CD8-positive, alpha-beta memory T cell (primary cell): ENCODE measurements at regions of chr17 and their contacts with region 1.

Region 1: DNA sequence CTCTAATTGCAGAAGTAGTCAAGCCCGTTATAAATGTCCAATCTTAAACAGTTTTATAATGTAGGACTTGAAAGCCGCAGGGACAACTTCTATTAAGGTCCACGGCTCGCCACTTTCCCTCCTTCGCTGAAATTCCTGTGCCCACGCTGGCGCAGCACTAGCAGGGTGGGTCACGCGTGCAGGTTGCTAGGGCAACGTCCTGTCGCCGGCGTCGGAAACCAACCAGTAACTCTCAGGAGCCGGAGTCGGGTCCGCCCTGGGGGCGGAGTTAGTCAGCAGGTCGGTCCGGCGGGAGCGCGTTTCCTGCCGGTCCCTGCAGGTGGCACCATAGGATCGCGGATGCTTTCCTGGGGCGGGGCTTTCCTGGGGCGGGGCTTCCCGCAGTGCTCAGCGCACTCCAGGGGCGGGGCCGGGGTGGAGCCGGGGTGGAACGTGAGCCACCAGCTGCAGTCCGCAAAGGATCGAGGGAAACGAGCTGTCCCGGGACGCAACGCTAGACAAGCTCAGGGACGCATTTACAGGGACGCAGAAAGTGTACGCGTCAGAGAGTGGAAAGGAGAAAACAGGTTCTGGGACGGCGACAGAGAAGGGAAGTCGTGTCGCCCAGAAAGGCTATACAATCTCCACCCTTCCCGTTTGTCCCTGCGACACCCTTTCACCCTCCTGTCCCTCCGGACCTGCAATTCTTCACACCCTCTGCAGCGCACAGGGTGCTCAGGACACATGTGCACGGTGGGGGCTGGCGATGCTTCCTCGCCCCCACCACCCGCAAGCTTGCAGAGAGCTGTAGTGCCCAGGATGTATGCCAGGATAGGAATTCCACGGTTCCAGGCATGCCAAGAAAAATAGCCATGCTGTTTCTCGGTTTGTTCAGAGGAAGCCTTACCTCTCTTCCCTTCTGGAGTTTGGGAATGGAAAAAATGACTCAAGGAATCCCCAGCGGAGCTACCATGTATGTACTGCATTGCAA is 12.4 kb downstream of the COPZ2 start:
- DNase-seq: peak; percentile 93 to 99 (median 98)
- H3K4me3 ChIP-seq: peak overlapping the region; percentile 60
- H3K4me3 Mint-ChIP-seq: peak overlapping the region; percentile 81 to 96 (median 88)
- H3K27ac ChIP-seq: peak overlapping the region; percentile 49
- H3K27ac Mint-ChIP-seq: peak overlapping the region; percentile 56 to 97 (median 90)
- H3K4me1 ChIP-seq: peaks cover 36% of the 10 kb centered on the region
- H3K4me1 Mint-ChIP-seq: peaks cover 24 to 35% (median 27%) of the 10 kb centered on the region in 3 donors
- H3K27me3 ChIP-seq: peaks cover 10% of the 10 kb centered on the region
- H3K27me3 Mint-ChIP-seq: peaks cover 19 to 27% of the 10 kb centered on the region in 2 donors

Region 2: DNA sequence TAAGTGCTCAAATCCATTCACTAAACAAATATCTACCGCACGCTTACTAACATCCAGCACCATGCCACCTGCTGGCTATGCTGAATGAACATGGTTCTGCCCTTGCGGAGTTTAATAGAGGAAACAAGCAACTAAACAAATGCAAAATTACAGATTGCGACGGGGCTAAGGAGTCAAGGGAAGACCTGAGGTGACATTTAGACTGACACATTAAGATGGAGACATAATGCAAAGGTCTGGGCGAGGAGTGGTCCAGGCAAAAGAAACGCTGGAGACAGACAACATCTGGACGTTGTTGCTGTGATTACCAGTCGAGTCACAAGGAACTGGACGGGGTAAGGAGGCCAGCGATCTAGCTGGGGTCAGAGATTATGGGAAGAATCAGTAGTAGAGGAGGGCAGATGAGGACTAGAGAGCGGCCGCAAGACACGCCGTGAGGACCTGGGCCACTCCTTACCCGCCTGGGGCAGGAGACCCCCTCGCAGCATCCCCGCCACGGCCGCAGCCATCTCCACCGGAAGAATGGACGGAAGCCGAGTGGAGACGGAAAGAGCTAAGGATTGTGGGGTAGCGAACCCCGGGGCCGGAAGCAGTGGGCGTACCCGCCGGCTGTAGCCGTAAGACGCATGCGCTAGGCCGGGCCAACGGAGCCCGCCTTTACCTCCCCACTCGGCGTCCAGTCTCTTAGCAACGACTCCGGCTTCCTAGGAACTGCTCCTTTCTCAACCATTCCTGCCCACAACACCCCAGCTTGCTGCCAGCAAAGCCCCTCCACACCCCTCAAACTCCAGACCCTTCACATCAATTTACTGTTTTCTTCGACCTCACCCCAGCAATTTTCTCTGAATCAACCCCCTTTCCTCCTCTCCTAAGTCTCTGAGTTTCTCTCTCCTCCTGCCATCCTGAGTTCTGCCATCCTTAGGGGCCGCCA is 194.0 kb before region 1 on chr17 and contains the starts of genes LRRC46 and MRPL10:
- CTCF ChIA-PET with region 1: no interaction called
- POLR2A ChIA-PET with region 1: no interaction called
- DNase-seq: peak; percentile 87 to 94 (median 90)
- H3K4me3 ChIP-seq: peak within 1 kb of the TSS; percentile 98
- H3K4me3 Mint-ChIP-seq: peak within 1 kb of the TSS; percentile 92 to 99 (median 95)
- H3K27ac ChIP-seq: peak within 1 kb of the TSS; percentile 98
- H3K27ac Mint-ChIP-seq: peak within 1 kb of the TSS; percentile 95 to 100 (median 100)
- H3K4me1 ChIP-seq: peaks cover 59% of the 10 kb centered on the region
- H3K4me1 Mint-ChIP-seq: peaks cover 50 to 78% (median 59%) of the 10 kb centered on the region in 3 donors
- H3K27me3 ChIP-seq: no peaks in the 10 kb centered on the region
- H3K27me3 Mint-ChIP-seq: peaks cover 0 to 4% of the 10 kb centered on the region in 2 donors
- total RNA-seq, gene LRRC46: 0.49 to 0.83 TPM
- total RNA-seq, gene MRPL10: 67.0 to 67.7 TPM

Region 3: GRCh38 chr17:47970704-47971463 is 54.3 kb before region 1 on chr17 and contains the start of gene CDK5RAP3:
- CTCF ChIA-PET with region 1: interaction called, 17 read pairs
- POLR2A ChIA-PET with region 1: interaction called, 4 read pairs
- DNase-seq: peak; percentile 97 to 98 (median 98)
- H3K4me3 ChIP-seq: peak within 1 kb of the TSS; percentile 74
- H3K4me3 Mint-ChIP-seq: peak within 1 kb of the TSS; percentile 98 to 100 (median 99)
- H3K27ac ChIP-seq: peak within 1 kb of the TSS; percentile 73
- H3K27ac Mint-ChIP-seq: peak within 1 kb of the TSS; percentile 90 to 99 (median 94)
- H3K4me1 ChIP-seq: peaks cover 14% of the 10 kb centered on the region
- H3K4me1 Mint-ChIP-seq: peaks cover 26 to 37% (median 33%) of the 10 kb centered on the region in 3 donors
- H3K27me3 ChIP-seq: no peaks in the 10 kb centered on the region
- H3K27me3 Mint-ChIP-seq: peaks cover 0 to 1% of the 10 kb centered on the region in 2 donors
- total RNA-seq, gene CDK5RAP3: 178 to 184 TPM

Region 4: DNA sequence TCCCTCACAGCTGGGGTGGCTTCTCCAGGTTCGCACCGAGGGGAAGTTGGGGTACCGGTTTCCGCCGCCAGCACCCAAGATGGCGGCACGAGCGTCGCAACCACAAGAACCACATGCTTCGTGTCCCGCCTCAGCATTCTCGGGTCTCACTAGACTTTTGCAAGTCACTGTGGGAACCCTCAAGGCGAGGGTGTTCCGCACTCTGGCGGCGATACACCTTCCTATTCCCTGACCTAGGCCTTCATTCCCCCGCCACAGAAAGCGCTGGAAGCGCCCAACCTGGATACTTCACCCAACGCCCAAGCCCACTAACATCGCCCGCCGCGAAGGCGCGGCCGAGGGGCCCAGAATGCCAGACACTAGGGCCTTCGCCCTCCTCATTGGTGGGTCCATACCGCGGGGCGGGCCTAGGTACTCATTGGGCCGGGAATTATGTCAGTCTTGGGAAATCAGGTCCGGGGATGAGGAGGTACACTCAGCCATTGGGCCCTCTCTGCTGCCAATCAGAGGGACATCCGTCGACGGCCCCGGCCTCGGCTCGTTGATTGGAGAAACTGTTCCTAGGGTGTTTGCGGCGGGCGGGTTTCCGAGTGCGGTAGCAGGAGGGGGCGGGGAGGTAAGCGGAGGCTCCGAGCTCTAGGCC is 22.6 kb after region 1 on chr17 and contains the start of gene NFE2L1:
- CTCF ChIA-PET with region 1: interaction called, 27 read pairs
- POLR2A ChIA-PET with region 1: interaction called, 4 read pairs
- DNase-seq: peak; percentile 96 to 99 (median 98)
- H3K4me3 ChIP-seq: peak within 1 kb of the TSS; percentile 84
- H3K4me3 Mint-ChIP-seq: peak within 1 kb of the TSS; percentile 85 to 99 (median 96)
- H3K27ac ChIP-seq: peak within 1 kb of the TSS; percentile 93
- H3K27ac Mint-ChIP-seq: peak within 1 kb of the TSS; percentile 85 to 100 (median 98)
- H3K4me1 ChIP-seq: peaks cover 50% of the 10 kb centered on the region
- H3K4me1 Mint-ChIP-seq: peaks cover 46 to 64% (median 62%) of the 10 kb centered on the region in 3 donors
- H3K27me3 ChIP-seq: no peaks in the 10 kb centered on the region
- H3K27me3 Mint-ChIP-seq: peaks cover 0 to 6% of the 10 kb centered on the region in 2 donors
- total RNA-seq, gene NFE2L1: 94.5 to 98.4 TPM

Region 5: GRCh38 chr17:48074315-48075081 is 49.3 kb after region 1 on chr17:
- CTCF ChIA-PET with region 1: interaction called, 45 read pairs
- POLR2A ChIA-PET with region 1: no interaction called
- DNase-seq: peak; percentile 60 to 80 (median 67)
- H3K4me3 ChIP-seq: no peak overlapping the region
- H3K4me3 Mint-ChIP-seq: no peak overlapping the region
- H3K27ac ChIP-seq: no peak overlapping the region
- H3K27ac Mint-ChIP-seq: no peak overlapping the region
- H3K4me1 ChIP-seq: no peaks in the 10 kb centered on the region
- H3K4me1 Mint-ChIP-seq: no peaks in the 10 kb centered on the region
- H3K27me3 ChIP-seq: no peaks in the 10 kb centered on the region
- H3K27me3 Mint-ChIP-seq: no peaks in the 10 kb centered on the region